ENCODE measurements at regions of chr19 and their contacts with region 1.

Region 1: GRCh38 chr19:44002566-44003460 is at the start of gene ZNF230:
- H3K4me3 ChIP-seq: peak within 1 kb of the TSS; percentile 52
- H3K27ac ChIP-seq: peak within 1 kb of the TSS; percentile 55
- H3K4me1 ChIP-seq: peaks cover 10% of the 10 kb centered on the region
- CTCF ChIP-seq: peak; percentile 83

Region 2: GRCh38 chr19:43687660-43687997 is 315.2 kb before region 1 on chr19:
- CTCF ChIA-PET with region 1: no interaction called
- POLR2A ChIA-PET with region 1: no interaction called
- H3K4me3 ChIP-seq: no peak overlapping the region
- H3K27ac ChIP-seq: peak overlapping the region; percentile 45; the same call in 1 of the 2 replicates
- H3K4me1 ChIP-seq: peaks cover 13% of the 10 kb centered on the region
- CTCF ChIP-seq: no peak

Region 3: DNA sequence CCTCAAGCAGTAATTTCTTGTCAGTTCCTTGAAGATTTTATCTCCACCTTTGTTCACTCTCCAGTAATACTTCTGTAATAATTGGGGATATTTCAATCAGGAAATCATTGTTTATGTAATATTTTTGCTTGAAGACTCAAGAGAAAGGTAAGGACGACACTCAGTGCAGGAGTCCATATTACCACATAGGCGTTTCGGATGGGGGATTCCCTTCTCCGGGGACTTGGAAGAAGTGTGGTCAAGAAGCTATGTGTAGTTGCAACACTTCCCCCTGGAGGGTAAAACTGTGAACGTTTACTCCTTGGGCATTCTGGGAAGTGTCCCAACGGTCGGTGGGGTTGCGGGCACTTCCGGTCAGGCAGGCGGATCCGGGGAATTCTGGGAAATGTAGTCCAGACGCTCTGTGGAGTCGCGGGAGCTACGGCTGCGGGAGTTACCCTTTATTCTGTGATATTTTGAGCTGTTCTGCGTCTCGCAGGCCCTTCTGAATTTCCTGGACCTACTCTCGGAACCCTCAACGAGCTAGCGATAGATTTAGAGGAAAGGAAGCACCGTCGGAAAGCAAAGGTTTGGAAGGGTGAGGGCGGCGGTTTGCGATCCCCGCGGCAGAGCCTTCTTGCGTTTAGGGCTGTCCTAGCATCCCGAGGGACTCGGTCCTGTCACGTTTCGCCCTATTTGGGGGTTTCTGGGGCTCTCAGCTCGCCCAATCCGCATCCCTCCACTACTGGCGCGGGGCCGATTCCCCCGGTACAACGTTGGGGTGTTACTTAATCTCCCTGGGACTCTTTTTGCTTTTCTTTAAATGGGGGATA is 51.8 kb before region 1 on chr19 and contains the start of gene ZNF221:
- CTCF ChIA-PET with region 1: interaction called, 3 read pairs
- POLR2A ChIA-PET with region 1: interaction called, 10 read pairs
- H3K4me3 ChIP-seq: peak within 1 kb of the TSS; percentile 57
- H3K27ac ChIP-seq: peak within 1 kb of the TSS; percentile 82
- H3K4me1 ChIP-seq: no peaks in the 10 kb centered on the region
- CTCF ChIP-seq: peak; percentile 98

Region 4: DNA sequence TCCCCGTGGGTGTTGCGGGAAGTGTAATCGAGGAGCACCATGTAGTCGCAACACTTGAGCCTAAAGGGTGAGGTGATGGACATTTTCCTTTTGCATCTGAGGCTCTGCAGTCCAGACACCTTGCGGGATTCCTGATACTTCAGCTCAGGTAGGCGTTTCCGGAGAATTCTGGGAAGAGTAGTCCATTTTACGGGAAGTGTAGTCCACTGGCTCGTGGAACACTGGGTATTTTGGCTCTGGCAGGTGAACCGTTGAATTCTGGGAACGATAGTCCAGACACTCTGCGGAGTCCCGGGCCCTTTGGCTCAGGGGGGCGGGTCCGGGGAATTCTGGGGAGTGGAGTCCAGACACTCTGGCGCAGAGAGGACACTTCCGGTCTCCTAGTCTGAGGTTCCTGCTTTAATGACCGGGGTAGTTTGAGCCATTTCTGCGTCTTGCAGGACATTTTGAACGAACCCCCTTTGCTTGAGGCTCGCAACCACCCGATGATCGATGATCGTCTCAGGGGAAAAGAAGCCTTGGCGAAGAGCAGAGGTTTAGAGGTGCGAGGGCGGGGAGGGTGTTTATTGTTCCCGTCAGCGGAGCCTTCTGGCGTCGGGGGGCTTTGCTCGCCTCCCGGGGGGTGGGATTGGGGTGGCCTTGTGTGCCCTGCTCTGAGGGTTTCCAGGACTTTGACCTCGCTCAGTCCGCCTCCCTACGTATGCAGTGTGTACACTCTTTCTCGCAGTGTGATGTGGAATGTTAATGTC is 49.0 kb after region 1 on chr19 and contains the start of gene ZNF223:
- CTCF ChIA-PET with region 1: interaction called, 3 read pairs
- POLR2A ChIA-PET with region 1: interaction called, 17 read pairs
- H3K4me3 ChIP-seq: peak within 1 kb of the TSS; percentile 66
- H3K27ac ChIP-seq: peak within 1 kb of the TSS; percentile 61
- H3K4me1 ChIP-seq: peaks cover 14% of the 10 kb centered on the region
- CTCF ChIP-seq: no peak; the same call in 1 of the 2 replicates

Region 5: GRCh38 chr19:44232867-44233266 is 230.1 kb after region 1 on chr19:
- CTCF ChIA-PET with region 1: no interaction called
- POLR2A ChIA-PET with region 1: no interaction called
- H3K4me3 ChIP-seq: no peak overlapping the region
- H3K27ac ChIP-seq: no peak overlapping the region
- H3K4me1 ChIP-seq: no peaks in the 10 kb centered on the region
- CTCF ChIP-seq: no peak